A673 (cell line): ENCODE measurements at regions of chr3 and their contacts with region 1.

Region 1: DNA sequence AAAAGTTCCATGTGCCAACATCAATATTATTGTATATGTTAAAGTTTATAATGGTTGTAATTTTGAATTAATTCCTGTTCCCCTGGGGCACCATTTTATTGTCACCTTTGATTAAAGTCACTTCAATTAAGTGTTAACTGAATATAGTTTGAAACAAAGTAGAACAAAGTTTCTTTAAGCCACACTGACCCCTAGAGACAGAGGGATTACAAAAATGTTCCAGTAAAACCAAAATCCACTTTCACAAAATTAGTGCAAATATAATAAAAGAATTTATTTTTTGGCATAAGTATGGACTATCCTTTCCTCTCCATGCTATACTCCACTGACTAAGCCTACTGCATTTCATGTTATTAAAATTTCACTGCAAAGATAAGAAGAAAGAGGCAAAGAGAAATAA is 123.9 kb downstream of the ZMAT3 start:
- DNase-seq: no peak
- H3K4me3 ChIP-seq: no peak overlapping the region
- H3K27ac ChIP-seq: no peak overlapping the region
- H3K4me1 ChIP-seq: no peaks in the 10 kb centered on the region
- H3K27me3 ChIP-seq: no peaks in the 10 kb centered on the region
- CTCF ChIP-seq: no peak; the same call in 1 of the 2 replicates

Region 2: DNA sequence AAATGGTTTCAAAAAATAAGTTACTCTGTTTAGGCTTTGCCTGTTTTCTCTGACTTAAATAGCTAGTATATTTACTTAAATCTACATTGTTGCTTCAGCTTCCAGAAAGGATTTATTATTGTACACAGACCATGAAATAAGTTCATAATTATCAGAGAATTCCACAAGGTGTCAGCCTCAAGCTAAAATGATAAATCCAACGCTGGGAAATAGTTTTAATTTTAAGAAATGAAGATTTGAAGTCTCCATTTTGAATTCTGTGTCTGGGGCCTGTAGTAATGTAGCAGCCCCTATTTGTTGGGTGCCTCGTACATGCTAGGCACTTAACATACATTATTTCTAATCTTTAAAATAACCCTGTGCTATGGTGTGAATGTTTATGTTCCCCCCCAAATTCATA is 504.1 kb before region 1 on chr3:
- CTCF ChIA-PET with region 1: no interaction called
- POLR2A ChIA-PET with region 1: no interaction called
- intact Hi-C with region 1: loop called (anchors 5 kb)
- DNase-seq: peak; percentile 35
- H3K4me3 ChIP-seq: no peak overlapping the region
- H3K27ac ChIP-seq: no peak overlapping the region
- H3K4me1 ChIP-seq: no peaks in the 10 kb centered on the region
- H3K27me3 ChIP-seq: no peaks in the 10 kb centered on the region
- CTCF ChIP-seq: peak; percentile 29; the same call in 1 of the 2 replicates

Region 3: GRCh38 chr3:178803027-178803693 is 144.6 kb before region 1 on chr3:
- CTCF ChIA-PET with region 1: no interaction called
- POLR2A ChIA-PET with region 1: no interaction called
- intact Hi-C with region 1: no loop called
- DNase-seq: no peak
- H3K4me3 ChIP-seq: no peak overlapping the region
- H3K27ac ChIP-seq: no peak overlapping the region
- H3K4me1 ChIP-seq: no peaks in the 10 kb centered on the region
- H3K27me3 ChIP-seq: no peaks in the 10 kb centered on the region
- CTCF ChIP-seq: no peak